ENCODE measurements at regions of chr15 and their contacts with region 1.

Region 1: DNA sequence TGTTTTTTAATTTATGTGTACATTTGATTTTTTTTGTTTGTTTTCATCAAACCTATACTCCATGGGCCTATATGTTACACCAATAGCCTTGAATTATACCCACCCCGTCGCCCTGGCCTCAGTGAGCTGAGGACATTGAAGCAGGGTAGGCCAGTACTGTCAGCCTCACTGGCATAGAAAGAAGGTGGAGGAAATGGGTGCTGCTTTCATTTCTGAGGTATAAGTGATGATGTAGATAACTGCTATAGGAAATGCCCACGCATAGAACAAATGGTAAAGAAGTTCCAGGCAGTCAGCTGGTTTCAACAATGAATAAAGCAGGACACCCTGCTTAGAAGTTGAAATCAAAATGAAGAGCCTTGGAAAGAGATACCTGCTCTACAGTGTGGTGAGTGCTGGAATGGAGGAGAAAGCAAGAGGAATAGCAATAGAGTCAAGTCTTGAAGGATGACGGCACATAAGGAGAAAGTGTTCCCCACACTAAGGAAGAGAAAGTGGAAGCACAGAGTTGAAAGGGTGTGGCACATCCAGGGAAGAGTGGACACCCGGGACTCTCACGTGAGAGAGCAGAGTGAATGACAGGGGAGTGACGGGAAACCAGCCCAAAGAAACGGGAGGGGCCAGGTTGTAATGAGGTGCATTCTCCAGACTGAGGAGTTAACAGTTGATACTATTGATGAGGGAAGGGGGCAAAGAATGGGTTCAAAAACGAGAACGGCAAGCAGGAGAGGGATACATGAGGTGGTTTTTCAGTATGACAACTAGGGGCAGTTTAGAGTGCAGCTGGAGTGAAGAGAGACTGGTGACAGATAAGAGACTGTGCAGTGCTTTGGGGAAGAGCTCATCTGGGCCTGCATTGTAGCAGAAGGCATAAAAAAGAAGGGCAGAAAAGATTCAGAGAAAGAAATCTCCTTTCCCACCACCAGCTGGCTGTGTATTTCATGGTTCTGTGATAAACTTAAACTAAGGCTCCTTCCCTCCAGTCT is 70.5 kb downstream of the KLHL25 start:
- DNase-seq: no peak
- H3K4me3 ChIP-seq: no peak overlapping the region
- H3K27ac ChIP-seq: peak overlapping the region; percentile 23 to 63
- H3K4me1 ChIP-seq: no peaks in the 10 kb centered on the region
- H3K27me3 ChIP-seq: no peaks in the 10 kb centered on the region
- CTCF ChIP-seq: no peak
- POLR2A ChIP-seq: no peak

Region 2: GRCh38 chr15:85494048-85494793 is 230.0 kb before region 1 on chr15:
- intact Hi-C with region 1: loop called (anchors 5 kb)
- DNase-seq: no peak
- H3K4me3 ChIP-seq: no peak overlapping the region
- H3K27ac ChIP-seq: no peak overlapping the region
- H3K4me1 ChIP-seq: peaks cover 6% of the 10 kb centered on the region
- H3K27me3 ChIP-seq: no peaks in the 10 kb centered on the region
- CTCF ChIP-seq: no peak
- POLR2A ChIP-seq: no peak

Measured in prostate gland (tissue), 2 donors.